Lower leg skin (tissue), 4 donors: ENCODE measurements at regions of chr17 and their contacts with region 1.

Region 1: DNA sequence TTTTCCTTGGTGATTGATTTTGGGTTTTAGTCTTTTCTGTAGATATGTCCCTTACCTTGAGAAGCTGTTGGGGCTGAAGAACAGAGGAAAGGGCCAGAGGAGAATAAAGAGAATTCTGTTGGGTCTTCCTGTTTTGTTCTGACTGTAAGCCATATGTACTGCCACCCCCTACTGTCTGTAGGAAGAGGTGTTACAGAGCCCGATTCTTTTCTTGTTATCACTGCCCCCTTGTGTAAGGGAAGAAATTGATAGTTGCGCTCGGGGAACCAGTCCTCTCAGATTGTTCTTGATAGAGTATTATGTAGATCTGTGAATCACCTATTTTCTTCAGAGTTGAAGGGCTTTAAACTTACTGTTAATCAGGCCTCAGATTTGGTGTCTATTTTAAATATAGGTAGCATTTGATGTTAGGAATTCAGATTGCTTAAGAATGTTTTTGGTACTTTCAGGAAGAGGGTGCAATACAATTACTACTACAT is 2.4 kb downstream of the TANC2 start:
- DNase-seq: peak in 1 of 2 donors; percentile 49
- H3K4me3 ChIP-seq: no peak overlapping the region
- CTCF ChIP-seq: peak in 1 of 3 donors; percentile 66
- POLR2A ChIP-seq: no peak

Region 2: DNA sequence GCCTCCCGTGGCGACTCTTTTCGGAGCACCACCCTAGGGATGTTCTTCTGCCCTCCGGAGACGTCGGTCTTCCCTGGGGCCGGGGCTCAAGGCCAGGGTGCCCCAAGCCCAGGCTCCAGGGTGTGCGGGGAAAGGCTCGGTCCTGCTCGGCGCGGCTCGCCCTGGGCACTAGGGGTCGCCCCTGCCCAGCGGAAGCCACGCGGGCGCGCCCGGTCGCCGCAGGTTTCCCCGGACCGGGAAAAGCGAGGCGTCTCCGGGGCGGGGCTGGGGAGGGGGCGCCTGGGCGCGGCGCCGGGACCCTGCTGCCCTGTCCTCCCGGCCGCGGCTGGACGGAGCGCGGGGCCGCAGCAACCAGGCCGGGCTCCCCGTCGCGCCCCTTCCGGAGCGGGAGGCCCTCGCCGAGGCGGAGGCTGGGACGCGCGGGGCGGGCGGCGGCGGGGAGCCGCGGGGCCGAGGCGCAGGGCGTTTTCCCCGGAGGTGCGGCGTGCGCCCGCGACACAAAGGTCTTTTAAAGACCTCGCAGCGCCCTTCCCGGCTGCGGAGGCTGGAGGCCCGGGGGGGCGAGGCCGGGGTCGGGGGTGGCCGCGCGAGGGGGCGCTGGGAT is 264.6 kb before region 1 on chr17:
- intact Hi-C with region 1: loop called (anchors 5 kb)
- DNase-seq: peak; percentile 61 to 95
- H3K4me3 ChIP-seq: peak overlapping the region; percentile 33
- CTCF ChIP-seq: no peak
- POLR2A ChIP-seq: no peak

Region 3: GRCh38 chr17:62916681-62917571 is 51.6 kb before region 1 on chr17:
- intact Hi-C with region 1: no loop called
- DNase-seq: peak in 1 of 2 donors; percentile 75
- H3K4me3 ChIP-seq: no peak overlapping the region
- CTCF ChIP-seq: no peak
- POLR2A ChIP-seq: no peak